Common myeloid progenitor, CD34-positive (primary cell): ENCODE measurements at regions of chr6 and their contacts with region 1.

Region 1: GRCh38 chr6:51350308-51350904 is 531.7 kb downstream of the TFAP2B start:
- DNase-seq: peak; percentile 14 to 60 (median 54)
- H3K4me3 ChIP-seq: no peak overlapping the region
- H3K27ac ChIP-seq: no peak overlapping the region
- H3K4me1 ChIP-seq: no peaks in the 10 kb centered on the region
- H3K27me3 ChIP-seq: peaks cover 0 to 4% (median 0%) of the 10 kb centered on the region in 5 experiments

Region 2: DNA sequence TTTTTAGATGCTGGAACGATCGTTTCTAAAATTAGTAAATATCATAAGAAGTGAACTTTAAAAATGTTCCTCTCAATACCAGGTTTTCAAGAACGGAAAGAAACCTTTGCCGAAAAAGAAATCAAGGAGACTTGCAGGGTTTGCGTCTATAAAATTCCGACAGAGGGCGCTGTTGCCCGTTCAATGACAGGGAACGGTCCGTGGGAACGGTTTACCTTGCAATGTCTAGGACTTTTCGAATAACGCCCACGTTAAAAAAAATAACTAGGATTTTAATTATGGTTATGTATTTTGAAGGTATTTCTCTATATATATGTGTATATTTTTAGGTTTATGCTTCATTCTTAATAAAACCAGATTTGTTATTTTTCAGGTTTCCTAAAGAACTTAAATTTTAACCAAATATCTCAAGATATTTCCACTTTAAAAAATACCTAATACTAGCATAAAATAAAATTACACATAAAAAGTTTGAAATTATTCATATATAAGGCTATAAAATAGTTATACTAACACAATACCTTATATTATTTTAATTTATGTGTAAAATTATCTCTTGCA is 534.2 kb before region 1 on chr6:
- CTCF ChIA-PET with region 1: interaction called, 40 read pairs
- POLR2A ChIA-PET with region 1: no interaction called
- DNase-seq: peak; percentile 75 to 79 (median 79)
- H3K4me3 ChIP-seq: peak overlapping the region in 6 of 7 experiments; percentile 61 to 94 (median 72)
- H3K27ac ChIP-seq: no peak overlapping the region
- H3K4me1 ChIP-seq: peaks cover 7 to 16% (median 12%) of the 10 kb centered on the region in 4 experiments
- H3K27me3 ChIP-seq: peaks cover 19 to 71% (median 37%) of the 10 kb centered on the region in 5 experiments